ENCODE measurements at regions of chr12 and their contacts with region 1.

Region 1: GRCh38 chr12:107685360-107686248 is at the start of gene PWP1:
- DNase-seq: peak; percentile 95 to 97 (median 96)
- ATAC-seq: peak; percentile 96
- H3K4me3 ChIP-seq: peak within 1 kb of the TSS; percentile 68 to 73
- H3K27ac ChIP-seq: peak within 1 kb of the TSS; percentile 7 to 86 (median 68)
- H3K4me1 ChIP-seq: peaks cover 16% of the 10 kb centered on the region
- H3K27me3 ChIP-seq: no peaks in the 10 kb centered on the region
- CTCF ChIP-seq: peak in 1 of 7 experiments; percentile 7
- POLR2A ChIP-seq: peak; percentile 58 to 93 (median 87)
- total RNA-seq, gene PWP1: 48.8 to 97.9 TPM

Region 2: DNA sequence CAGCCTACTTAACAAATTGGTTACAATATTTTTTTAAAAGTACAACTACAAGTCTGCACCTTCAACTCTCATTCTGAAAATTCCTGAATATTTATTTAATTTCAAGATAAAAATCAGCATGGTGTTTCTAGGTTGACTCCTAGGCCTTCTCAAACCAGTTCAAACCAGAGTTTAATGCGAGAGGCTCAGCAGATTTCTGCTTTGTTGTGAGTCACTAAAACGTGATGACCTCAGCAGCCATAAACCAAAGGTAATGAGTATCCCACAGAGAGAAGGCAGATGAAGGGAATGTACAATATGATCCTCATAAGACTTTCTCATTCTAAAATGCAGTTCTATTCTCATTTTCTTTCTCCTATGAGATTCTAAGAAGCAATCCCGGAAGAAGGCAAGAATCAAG is 73.8 kb after region 1 on chr12:
- intact Hi-C with region 1: loop called (anchors 10 kb)
- DNase-seq: no peak
- ATAC-seq: no peak
- H3K4me3 ChIP-seq: no peak overlapping the region
- H3K27ac ChIP-seq: peak overlapping the region in 1 of 4 donors; percentile 12
- H3K4me1 ChIP-seq: peaks cover 28% of the 10 kb centered on the region
- H3K27me3 ChIP-seq: no peaks in the 10 kb centered on the region
- CTCF ChIP-seq: no peak
- POLR2A ChIP-seq: no peak